ENCODE measurements at regions of chr1 and their contacts with region 1.

Region 1: GRCh38 chr1:202315576-202316168 is 26.1 kb downstream of the UBE2T start:
- H3K4me3 Mint-ChIP-seq: no peak overlapping the region
- H3K27ac Mint-ChIP-seq: no peak overlapping the region
- H3K4me1 Mint-ChIP-seq: no peaks in the 10 kb centered on the region
- H3K27me3 Mint-ChIP-seq: peaks cover 44% of the 10 kb centered on the region

Region 2: GRCh38 chr1:202192770-202193613 is 122.7 kb before region 1 on chr1:
- intact Hi-C with region 1: loop called (anchors 1 kb)
- H3K4me3 Mint-ChIP-seq: no peak overlapping the region
- H3K27ac Mint-ChIP-seq: no peak overlapping the region
- H3K4me1 Mint-ChIP-seq: no peaks in the 10 kb centered on the region
- H3K27me3 Mint-ChIP-seq: peaks cover 64% of the 10 kb centered on the region

Region 3: GRCh38 chr1:202349206-202349928 is 33.7 kb after region 1 on chr1:
- intact Hi-C with region 1: no loop called
- H3K4me3 Mint-ChIP-seq: peak overlapping the region; percentile 100
- H3K27ac Mint-ChIP-seq: peak overlapping the region; percentile 95
- H3K4me1 Mint-ChIP-seq: peaks cover 38% of the 10 kb centered on the region
- H3K27me3 Mint-ChIP-seq: no peaks in the 10 kb centered on the region

Region 4: GRCh38 chr1:202405928-202406327 is 90.3 kb after region 1 on chr1:
- intact Hi-C with region 1: no loop called
- H3K4me3 Mint-ChIP-seq: no peak overlapping the region
- H3K27ac Mint-ChIP-seq: no peak overlapping the region
- H3K4me1 Mint-ChIP-seq: peaks cover 3% of the 10 kb centered on the region
- H3K27me3 Mint-ChIP-seq: no peaks in the 10 kb centered on the region